Aorta (tissue), 5 donors: ENCODE measurements at regions of chr6 and their contacts with region 1.

Region 1: GRCh38 chr6:109304284-109305015 is 77.8 kb downstream of the CD164 start:
- DNase-seq: no peak
- ATAC-seq: no peak
- H3K4me3 ChIP-seq: no peak overlapping the region
- H3K27ac ChIP-seq: peak overlapping the region in 1 of 2 donors; percentile 38
- H3K4me1 ChIP-seq: peaks cover 0 to 8% of the 10 kb centered on the region in 2 donors
- H3K27me3 ChIP-seq: no peaks in the 10 kb centered on the region

Region 2: GRCh38 chr6:109082188-109082577 is 222.3 kb before region 1 on chr6:
- intact Hi-C with region 1: no loop called
- DNase-seq: no peak
- ATAC-seq: no peak
- H3K4me3 ChIP-seq: no peak overlapping the region
- H3K27ac ChIP-seq: peak overlapping the region in 1 of 2 donors; percentile 32
- H3K4me1 ChIP-seq: peaks cover 3 to 12% of the 10 kb centered on the region in 2 donors
- H3K27me3 ChIP-seq: no peaks in the 10 kb centered on the region

Region 3: DNA sequence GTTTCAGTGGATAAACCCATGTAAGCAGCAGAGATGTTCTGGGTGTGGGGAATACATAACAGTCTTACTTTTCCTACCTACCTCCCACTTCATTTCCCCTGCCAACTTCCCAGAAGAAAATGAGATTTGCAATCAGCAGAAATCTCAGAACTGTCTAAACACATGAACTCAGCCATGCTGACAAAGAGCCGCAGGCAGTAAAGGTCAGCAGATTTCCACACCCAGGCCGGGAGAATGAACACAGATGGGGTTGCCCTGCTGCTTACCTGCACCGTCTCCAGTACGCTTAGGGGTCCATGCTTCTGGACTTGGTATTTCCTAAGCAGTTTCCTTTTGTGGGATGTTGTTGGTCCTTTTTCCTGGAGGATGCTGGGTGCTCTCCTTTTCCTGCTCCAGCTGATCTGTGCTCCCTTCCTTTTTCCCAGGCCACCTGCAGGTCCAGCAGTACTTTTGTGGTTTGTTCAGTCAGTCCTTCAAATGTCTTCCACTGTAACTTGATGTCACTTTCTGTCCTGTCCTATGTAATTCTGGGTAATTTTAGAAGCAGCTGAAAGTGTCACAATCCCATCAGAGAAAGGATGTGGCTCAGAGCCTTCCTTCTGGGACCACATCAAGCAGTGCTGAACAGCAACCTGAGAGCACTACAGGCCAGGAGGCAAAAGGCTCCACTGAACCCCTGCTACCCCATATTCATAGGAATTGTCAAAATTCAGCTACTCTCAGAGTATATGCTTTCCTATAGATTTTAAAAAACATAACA is 80.2 kb before region 1 on chr6:
- intact Hi-C with region 1: loop called (anchors 5 to 10 kb)
- DNase-seq: no peak
- ATAC-seq: no peak
- H3K4me3 ChIP-seq: no peak overlapping the region
- H3K27ac ChIP-seq: no peak overlapping the region
- H3K4me1 ChIP-seq: peaks cover 0 to 6% of the 10 kb centered on the region in 2 donors
- H3K27me3 ChIP-seq: no peaks in the 10 kb centered on the region

Region 4: DNA sequence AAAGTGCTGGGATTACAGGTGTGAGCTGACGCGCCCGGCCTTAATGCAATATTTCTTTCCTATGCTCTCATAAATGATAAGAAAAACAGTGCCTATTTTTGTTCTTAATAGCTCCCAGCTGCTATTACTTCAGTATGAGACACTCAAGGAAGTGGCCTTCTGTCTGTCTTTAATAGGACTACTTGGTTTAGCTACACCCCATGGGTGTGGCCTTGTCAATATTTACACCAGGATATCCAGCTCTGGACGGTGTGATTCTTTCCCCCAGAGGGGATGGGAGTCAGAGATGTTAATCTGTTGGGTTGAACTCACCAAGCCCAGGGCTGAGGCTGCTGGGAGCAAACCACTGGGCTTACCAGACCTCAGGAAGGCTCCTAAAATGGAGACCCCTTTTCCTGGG is 74.9 kb before region 1 on chr6:
- intact Hi-C with region 1: loop called (anchors 5 to 10 kb)
- DNase-seq: no peak
- ATAC-seq: no peak
- H3K4me3 ChIP-seq: no peak overlapping the region
- H3K27ac ChIP-seq: no peak overlapping the region
- H3K4me1 ChIP-seq: peaks cover 0 to 3% of the 10 kb centered on the region in 2 donors
- H3K27me3 ChIP-seq: no peaks in the 10 kb centered on the region

Region 5: DNA sequence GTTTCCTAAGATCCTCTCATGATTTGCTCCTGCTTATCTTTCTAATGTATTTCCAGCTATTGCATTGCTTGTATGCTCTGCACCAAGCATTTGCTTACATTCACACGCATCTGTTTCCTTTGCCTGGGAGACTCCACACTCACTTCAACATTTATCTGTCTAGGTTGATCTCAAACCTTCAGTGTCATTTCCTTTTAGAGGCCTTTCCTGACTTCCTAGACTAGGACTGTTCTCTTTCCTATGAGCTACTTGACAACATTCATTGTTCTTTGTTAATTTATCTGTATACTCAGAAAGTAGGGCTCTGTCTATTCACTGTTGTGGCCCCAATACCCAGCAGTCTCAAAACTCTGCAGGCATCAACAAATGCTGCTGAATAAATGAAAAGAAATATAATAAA is 790.7 kb after region 1 on chr6:
- intact Hi-C with region 1: no loop called
- DNase-seq: no peak
- ATAC-seq: no peak
- H3K4me3 ChIP-seq: no peak overlapping the region
- H3K27ac ChIP-seq: no peak overlapping the region
- H3K4me1 ChIP-seq: peaks cover 0 to 2% of the 10 kb centered on the region in 2 donors
- H3K27me3 ChIP-seq: no peaks in the 10 kb centered on the region